ENCODE measurements at regions of chr9 and their contacts with region 1.

Region 1: DNA sequence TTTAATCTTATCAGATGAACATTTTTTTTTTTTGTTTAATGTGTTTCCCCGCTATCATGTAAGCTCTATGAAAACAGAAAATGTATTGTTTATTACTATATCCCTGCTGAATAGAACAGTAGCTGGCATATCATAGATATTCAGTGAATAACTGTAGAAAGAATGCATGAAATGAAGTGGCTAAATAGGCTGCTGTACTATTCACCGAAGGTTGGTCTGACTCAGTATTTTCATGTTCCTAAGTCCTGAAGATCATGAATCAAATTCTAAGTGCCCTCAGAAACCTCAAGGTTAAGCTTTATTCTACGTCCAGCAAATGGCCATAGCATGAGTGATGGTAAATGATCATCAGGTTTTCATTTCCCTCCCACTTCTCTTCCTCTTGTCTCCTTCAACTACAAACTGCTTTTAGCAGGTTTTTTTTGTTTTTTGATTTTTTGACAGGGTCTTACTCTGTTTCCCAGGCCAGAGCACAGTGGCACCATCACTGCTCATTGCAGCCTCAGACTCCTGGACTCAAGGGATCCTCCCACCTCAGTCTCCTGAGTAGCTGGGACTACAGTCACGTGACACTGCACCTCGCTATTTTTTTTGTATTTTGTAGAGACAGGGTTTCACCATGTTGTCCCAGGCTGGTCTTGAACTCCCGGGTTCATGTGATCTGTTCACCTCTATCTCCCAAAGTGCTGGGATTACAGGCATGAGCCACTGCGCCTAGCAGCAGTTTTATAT is 19.1 kb upstream of the ZFAND5 start:
- DNase-seq: peak; percentile 94
- ATAC-seq: peak; percentile 89
- H3K4me3 ChIP-seq: no peak overlapping the region
- H3K27ac ChIP-seq: peak overlapping the region; percentile 40
- H3K4me1 ChIP-seq: peaks cover 17% of the 10 kb centered on the region
- H3K27me3 ChIP-seq: no peaks in the 10 kb centered on the region
- CTCF ChIP-seq: no peak
- POLR2A ChIP-seq: no peak
- RAD21 ChIP-seq: peak; percentile 16

Region 2: DNA sequence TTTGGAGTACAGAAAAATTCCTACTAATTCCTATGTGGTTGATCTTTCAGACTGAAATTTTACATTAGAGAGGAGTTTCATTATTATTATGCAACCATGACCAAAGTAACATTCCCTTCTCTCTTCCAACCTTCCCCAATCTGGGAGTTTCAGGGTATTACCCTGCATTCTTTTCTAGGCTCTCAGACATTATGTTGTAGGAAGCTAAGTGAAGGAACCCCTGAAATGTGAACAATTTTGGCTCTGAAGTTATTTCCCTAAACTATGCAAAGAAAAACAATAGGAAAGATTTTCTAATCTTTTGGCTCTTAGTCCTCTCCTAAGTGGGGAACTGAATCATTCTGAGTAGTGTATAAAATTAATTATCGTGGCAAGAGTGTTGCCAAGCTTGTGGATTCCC is 44.2 kb after region 1 on chr9:
- CTCF ChIA-PET with region 1: no interaction called
- POLR2A ChIA-PET with region 1: no interaction called
- dilution Hi-C with region 1: no loop called
- in situ Hi-C with region 1: no loop called
- intact Hi-C with region 1: loop called (anchors 2 kb)
- DNase-seq: peak; percentile 60
- ATAC-seq: peak; percentile 84
- H3K4me3 ChIP-seq: no peak overlapping the region
- H3K27ac ChIP-seq: no peak overlapping the region
- H3K4me1 ChIP-seq: peaks cover 2% of the 10 kb centered on the region; the same call in 1 of the 2 replicates
- H3K27me3 ChIP-seq: no peaks in the 10 kb centered on the region
- CTCF ChIP-seq: no peak
- POLR2A ChIP-seq: no peak
- RAD21 ChIP-seq: no peak

Measured in IMR-90 (cell line).